ENCODE measurements at regions of chr19 and their contacts with region 1.

Region 1: GRCh38 chr19:12994701-12995595 is at the start of gene NFIX:
- DNase-seq: peak; percentile 32
- H3K4me3 ChIP-seq: peak within 1 kb of the TSS; percentile 2 to 85 (median 36)
- H3K27ac ChIP-seq: no peak within 1 kb of the TSS
- H3K4me1 ChIP-seq: peaks cover 5% of the 10 kb centered on the region
- H3K27me3 ChIP-seq: no peaks in the 10 kb centered on the region
- CTCF ChIP-seq: no peak
- POLR2A ChIP-seq: no peak
- total RNA-seq, gene NFIX: 18.7 and 37.7 TPM in 2 replicates

Region 2: DNA sequence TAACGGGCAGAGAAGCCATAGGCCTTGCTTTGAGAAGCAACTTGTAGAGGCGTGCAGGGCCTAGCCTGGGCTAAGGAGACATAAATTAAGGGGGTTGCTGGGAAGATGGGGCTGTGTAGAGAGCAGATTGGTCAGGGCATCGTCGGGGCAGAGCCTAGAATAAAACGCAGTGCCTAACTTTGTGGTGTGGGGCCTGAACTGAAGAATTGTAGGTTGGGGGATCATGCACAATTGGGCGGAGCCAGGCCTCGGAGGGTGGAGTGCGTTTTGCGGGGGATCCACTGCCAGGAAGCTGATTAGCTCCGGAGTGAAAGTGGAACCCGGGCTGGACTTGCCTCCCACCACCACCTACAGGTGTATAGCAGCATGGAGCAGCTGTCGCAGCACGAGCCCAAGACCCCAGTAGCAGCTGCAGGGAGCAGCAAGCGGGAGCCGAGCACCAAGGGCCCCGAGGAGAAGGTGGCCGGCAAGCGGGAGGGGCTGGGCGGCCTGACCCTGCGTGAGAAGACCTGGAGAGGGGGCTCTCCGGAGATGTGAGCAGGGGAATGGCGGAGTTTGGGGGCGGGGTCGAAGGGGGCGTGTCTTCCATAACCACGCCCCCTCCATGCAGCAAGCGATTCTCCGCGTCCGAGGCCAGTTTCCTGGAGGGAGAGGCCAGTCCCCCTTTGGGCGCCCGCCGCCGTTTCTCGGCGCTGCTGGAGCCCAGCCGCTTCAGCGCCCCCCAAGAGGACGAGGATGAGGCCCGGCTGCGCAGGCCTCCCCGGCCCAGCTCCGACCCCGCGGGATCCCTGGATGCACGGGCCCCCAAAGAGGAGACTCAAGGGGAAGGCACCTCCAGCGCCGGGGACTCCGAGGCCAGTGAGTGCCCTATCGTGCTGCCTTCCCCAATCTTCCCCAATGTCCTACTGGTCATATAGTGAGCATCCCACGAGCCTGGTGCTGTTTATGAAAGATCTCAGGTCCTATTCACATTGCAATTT is 127.5 kb before region 1 on chr19:
- CTCF ChIA-PET with region 1: no interaction called
- POLR2A ChIA-PET with region 1: no interaction called
- dilution Hi-C with region 1: no loop called
- intact Hi-C with region 1: no loop called
- DNase-seq: peak; percentile 73
- H3K4me3 ChIP-seq: peak overlapping the region in 2 of 3 experiments; percentile 7 to 30
- H3K27ac ChIP-seq: no peak overlapping the region
- H3K4me1 ChIP-seq: peaks cover 2% of the 10 kb centered on the region
- H3K27me3 ChIP-seq: no peaks in the 10 kb centered on the region
- CTCF ChIP-seq: no peak
- POLR2A ChIP-seq: no peak

Region 3: GRCh38 chr19:12890787-12891552 is 104.0 kb before region 1 on chr19 and contains the start of gene GCDH:
- CTCF ChIA-PET with region 1: no interaction called
- POLR2A ChIA-PET with region 1: no interaction called
- dilution Hi-C with region 1: no loop called
- intact Hi-C with region 1: no loop called
- DNase-seq: peak; percentile 99
- H3K4me3 ChIP-seq: peak within 1 kb of the TSS; percentile 40 to 79 (median 68)
- H3K27ac ChIP-seq: no peak within 1 kb of the TSS
- H3K4me1 ChIP-seq: peaks cover 10% of the 10 kb centered on the region
- H3K27me3 ChIP-seq: peaks cover 5% of the 10 kb centered on the region in 2 experiments
- CTCF ChIP-seq: no peak
- POLR2A ChIP-seq: no peak
- total RNA-seq, gene GCDH: 27.1 and 27.3 TPM in 2 replicates

Region 4: GRCh38 chr19:13012690-13013608 is 18.0 kb after region 1 on chr19:
- CTCF ChIA-PET with region 1: interaction called, 3 read pairs
- POLR2A ChIA-PET with region 1: interaction called, 5 read pairs
- dilution Hi-C with region 1: no loop called
- intact Hi-C with region 1: loop called (anchors 2 kb)
- DNase-seq: peak; percentile 11
- H3K4me3 ChIP-seq: peak overlapping the region in 1 of 3 experiments; percentile 1
- H3K27ac ChIP-seq: no peak overlapping the region
- H3K4me1 ChIP-seq: no peaks in the 10 kb centered on the region
- H3K27me3 ChIP-seq: peaks cover 0 to 12% of the 10 kb centered on the region in 2 experiments
- CTCF ChIP-seq: no peak
- POLR2A ChIP-seq: no peak

Region 5: DNA sequence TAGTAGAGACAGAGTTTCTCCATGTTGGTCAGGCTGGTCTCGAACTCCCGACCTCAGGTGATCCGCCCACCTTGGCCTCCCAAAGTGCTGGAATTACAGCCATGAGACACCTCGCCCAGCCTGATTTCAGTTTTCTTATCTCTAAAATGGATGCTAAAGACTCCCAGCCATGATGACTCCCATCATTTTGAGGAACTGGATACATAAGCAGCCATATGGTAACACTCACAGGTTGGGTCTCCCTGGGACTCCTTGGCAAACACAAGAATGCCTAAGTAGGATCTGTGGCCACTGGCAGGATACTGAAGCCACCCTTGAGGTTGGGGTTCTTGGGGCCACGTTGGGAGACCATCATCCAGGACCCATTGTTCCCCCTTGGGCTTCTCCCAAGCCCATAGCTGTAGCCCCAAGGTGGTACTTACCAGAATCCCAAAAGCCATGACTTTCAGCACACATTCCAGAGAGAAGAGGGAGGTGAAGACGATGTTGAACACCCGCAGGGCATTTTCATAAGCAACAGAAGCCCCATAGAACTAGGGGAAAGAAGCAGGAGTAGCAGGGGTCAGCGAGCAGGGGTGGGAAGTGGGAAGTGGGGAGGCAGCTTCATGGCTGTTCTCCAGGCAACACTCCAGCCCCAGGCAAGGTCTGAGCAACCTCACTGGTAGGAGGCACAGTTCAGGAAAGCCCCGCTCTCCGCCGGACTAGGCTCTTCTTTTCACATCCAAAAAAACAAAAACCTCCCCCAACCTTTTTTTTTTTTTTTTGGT is 257.8 kb after region 1 on chr19:
- CTCF ChIA-PET with region 1: no interaction called
- POLR2A ChIA-PET with region 1: no interaction called
- dilution Hi-C with region 1: no loop called
- intact Hi-C with region 1: no loop called
- DNase-seq: no peak
- H3K4me3 ChIP-seq: no peak overlapping the region
- H3K27ac ChIP-seq: no peak overlapping the region
- H3K4me1 ChIP-seq: peaks cover 3% of the 10 kb centered on the region
- H3K27me3 ChIP-seq: peaks cover 0 to 3% of the 10 kb centered on the region in 2 experiments
- CTCF ChIP-seq: no peak
- POLR2A ChIP-seq: no peak